ENCODE measurements at regions of chr21 and their contacts with region 1.

Region 1: GRCh38 chr21:39712972-39713371 is 32.0 kb upstream of the IGSF5 start:
- DNase-seq: no peak
- ATAC-seq: no peak
- H3K4me3 ChIP-seq: no peak overlapping the region
- H3K27ac ChIP-seq: no peak overlapping the region
- H3K4me1 ChIP-seq: no peaks in the 10 kb centered on the region
- H3K27me3 ChIP-seq: no peaks in the 10 kb centered on the region
- CTCF ChIP-seq: no peak

Region 2: DNA sequence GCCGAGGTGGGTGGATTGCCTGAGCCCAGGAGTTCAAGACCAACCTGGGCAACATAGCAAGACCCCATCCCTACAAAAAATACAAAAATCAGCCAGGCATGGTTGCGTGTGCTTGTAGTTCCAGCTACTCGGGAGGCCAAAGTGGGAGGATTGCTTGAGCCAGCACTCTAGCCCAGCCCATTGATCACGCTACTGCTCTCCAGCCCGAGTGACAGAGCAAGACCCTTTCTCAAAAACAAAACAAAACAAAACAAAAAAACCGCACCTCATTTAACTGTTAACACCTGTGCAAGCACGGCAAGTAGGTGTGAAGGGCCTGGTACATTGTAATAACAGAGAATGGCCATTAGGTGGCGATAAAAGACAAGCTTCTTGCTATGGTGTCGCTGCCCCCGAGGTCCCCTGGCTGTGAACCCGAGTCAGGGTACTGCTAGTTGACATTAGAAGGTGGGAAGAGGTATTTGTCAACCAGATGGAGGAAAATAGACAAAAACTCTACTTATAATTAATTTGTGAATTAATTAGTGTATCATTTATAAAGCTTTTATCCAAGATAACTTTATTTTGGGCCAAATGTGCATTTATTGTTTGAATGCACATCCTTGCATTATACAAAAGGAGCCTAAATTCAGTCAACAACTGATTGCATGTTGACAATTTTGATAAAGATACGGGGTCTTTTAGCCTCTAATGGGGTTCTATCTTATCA is 194.7 kb before region 1 on chr21:
- intact Hi-C with region 1: loop called (anchors 5 kb)
- DNase-seq: no peak
- ATAC-seq: peak; percentile 81 to 87
- H3K4me3 ChIP-seq: no peak overlapping the region
- H3K27ac ChIP-seq: no peak overlapping the region
- H3K4me1 ChIP-seq: no peaks in the 10 kb centered on the region
- H3K27me3 ChIP-seq: no peaks in the 10 kb centered on the region
- CTCF ChIP-seq: peak; percentile 87